Naive thymus-derived CD4-positive, alpha-beta T cell (primary cell): ENCODE measurements at regions of chr22 and their contacts with region 1.

Region 1: DNA sequence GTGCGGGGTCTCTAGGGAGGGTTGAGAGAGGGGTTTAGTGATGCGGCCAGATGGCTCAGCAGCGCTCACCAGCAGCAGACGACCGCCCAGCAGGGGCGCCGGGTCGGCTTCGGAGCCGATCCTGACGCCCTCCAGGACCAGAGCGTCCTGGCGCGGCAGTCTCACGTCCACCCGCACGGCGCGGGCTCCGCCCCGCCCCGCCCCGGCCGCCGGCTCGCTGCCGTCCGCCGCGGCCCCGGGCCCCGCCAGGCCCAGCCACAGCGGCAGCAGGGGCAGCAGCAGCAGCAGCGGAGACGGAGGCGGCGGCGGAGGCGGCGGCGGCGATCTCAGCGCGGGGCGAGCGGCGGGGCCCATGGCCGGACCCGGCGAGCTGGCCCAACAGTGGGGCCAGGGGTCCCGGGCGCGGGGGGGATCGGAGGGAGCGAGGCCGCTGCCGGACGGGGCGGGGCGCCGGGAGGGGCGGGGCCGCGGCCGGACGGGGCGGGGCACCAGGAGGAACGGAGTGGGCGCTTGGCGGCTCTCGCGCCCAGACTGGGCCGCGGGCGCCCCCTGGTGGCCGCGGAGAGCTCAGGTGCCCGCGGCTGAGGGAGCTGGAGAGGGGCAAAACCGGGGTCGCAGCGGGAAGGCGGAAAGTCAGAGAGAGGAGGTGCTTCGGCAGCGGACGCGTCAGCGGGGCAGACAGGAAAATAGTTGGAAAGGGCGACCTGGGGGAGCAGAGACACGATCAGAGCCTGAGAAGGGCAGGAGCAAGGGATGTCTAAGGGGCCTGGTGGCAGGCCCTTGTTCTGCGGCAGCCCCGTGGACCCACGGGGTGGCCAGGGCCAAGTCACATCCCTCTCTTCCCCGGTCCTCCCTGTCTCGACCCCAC is at the start of gene RNF215:
- DNase-seq: peak; percentile 55 to 92 (median 82)
- ATAC-seq: peak; percentile 97
- H3K4me3 ChIP-seq: no peak within 1 kb of the TSS
- H3K4me3 Mint-ChIP-seq: peak within 1 kb of the TSS; percentile 54 to 83 (median 78)
- H3K27ac ChIP-seq: peak within 1 kb of the TSS; percentile 26
- H3K27ac Mint-ChIP-seq: peak within 1 kb of the TSS in 6 of 9 donors; percentile 41 to 86 (median 70)
- H3K4me1 ChIP-seq: peaks cover 3 to 10% of the 10 kb centered on the region in 2 donors
- H3K4me1 Mint-ChIP-seq: peaks cover 16 to 22% (median 20%) of the 10 kb centered on the region in 7 donors
- H3K27me3 ChIP-seq: no peaks in the 10 kb centered on the region
- H3K27me3 Mint-ChIP-seq: peaks cover 0 to 4% (median 0%) of the 10 kb centered on the region in 5 donors
- total RNA-seq, gene RNF215: 4.3 to 10.8 (median 5.3) TPM

Region 2: GRCh38 chr22:30104501-30105156 is 282.6 kb before region 1 on chr22:
- CTCF ChIA-PET with region 1: interaction called, 7 read pairs
- POLR2A ChIA-PET with region 1: no interaction called
- intact Hi-C with region 1: loop called (anchors 1 to 5 kb)
- DNase-seq: peak in 6 of 9 donors; percentile 28 to 62 (median 45)
- ATAC-seq: no peak
- H3K4me3 ChIP-seq: no peak overlapping the region
- H3K4me3 Mint-ChIP-seq: peak overlapping the region in 8 of 10 donors; percentile 22 to 63 (median 42)
- H3K27ac ChIP-seq: no peak overlapping the region
- H3K27ac Mint-ChIP-seq: peak overlapping the region in 3 of 9 donors; percentile 25 to 66 (median 33)
- H3K4me1 ChIP-seq: peaks cover 0 to 16% of the 10 kb centered on the region in 2 donors
- H3K4me1 Mint-ChIP-seq: peaks cover 22 to 62% (median 46%) of the 10 kb centered on the region in 7 donors
- H3K27me3 ChIP-seq: no peaks in the 10 kb centered on the region
- H3K27me3 Mint-ChIP-seq: no peaks in the 10 kb centered on the region

Region 3: GRCh38 chr22:30326706-30327362 is 60.4 kb before region 1 on chr22 and contains the start of gene TBC1D10A:
- CTCF ChIA-PET with region 1: interaction called, 4 read pairs
- POLR2A ChIA-PET with region 1: interaction called, 4 read pairs
- intact Hi-C with region 1: loop called (anchors 1 to 2 kb)
- DNase-seq: peak; percentile 87 to 93 (median 92)
- ATAC-seq: peak; percentile 97
- H3K4me3 ChIP-seq: peak within 1 kb of the TSS; percentile 83
- H3K4me3 Mint-ChIP-seq: peak within 1 kb of the TSS; percentile 87 to 96 (median 93)
- H3K27ac ChIP-seq: peak within 1 kb of the TSS; percentile 78
- H3K27ac Mint-ChIP-seq: peak within 1 kb of the TSS; percentile 82 to 94 (median 90)
- H3K4me1 ChIP-seq: peaks cover 43 to 49% of the 10 kb centered on the region in 2 donors
- H3K4me1 Mint-ChIP-seq: peaks cover 37 to 55% (median 48%) of the 10 kb centered on the region in 7 donors
- H3K27me3 ChIP-seq: no peaks in the 10 kb centered on the region
- H3K27me3 Mint-ChIP-seq: no peaks in the 10 kb centered on the region
- total RNA-seq, gene TBC1D10A: 47.2 to 73.8 (median 70.9) TPM

Region 4: DNA sequence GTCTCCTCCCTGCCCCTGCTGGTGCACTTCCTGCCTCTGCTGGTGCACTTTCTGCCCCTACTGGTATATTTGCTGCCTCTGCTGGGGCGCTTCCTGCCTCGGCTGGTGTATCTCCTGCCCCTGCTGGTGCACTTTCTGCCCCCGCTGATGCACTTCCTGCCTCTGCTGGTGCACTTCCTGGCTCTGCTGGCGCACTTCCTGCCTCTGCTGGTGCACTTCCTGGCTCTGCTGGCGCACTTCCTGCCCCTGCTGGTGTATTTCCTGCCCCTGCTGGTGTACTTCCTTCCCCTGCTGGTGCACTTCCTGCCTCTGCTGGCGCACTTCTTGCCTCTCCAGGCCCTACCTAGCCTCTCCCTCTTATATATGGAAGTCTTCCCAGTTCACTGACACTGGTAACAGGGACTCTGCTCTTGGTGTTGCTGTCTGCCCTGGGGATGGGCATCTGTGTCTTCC is 48.5 kb after region 1 on chr22:
- CTCF ChIA-PET with region 1: interaction called, 4 read pairs
- POLR2A ChIA-PET with region 1: interaction called, 5 read pairs
- intact Hi-C with region 1: loop called in 1 of 2 experiments (anchors 2 kb)
- DNase-seq: peak; percentile 45 to 97 (median 92)
- ATAC-seq: peak; percentile 94
- H3K4me3 ChIP-seq: peak overlapping the region; percentile 53
- H3K4me3 Mint-ChIP-seq: peak overlapping the region; percentile 57 to 90 (median 83)
- H3K27ac ChIP-seq: peak overlapping the region; percentile 99
- H3K27ac Mint-ChIP-seq: peak overlapping the region; percentile 88 to 100 (median 98)
- H3K4me1 ChIP-seq: peaks cover 16 to 21% of the 10 kb centered on the region in 2 donors
- H3K4me1 Mint-ChIP-seq: peaks cover 10 to 26% (median 23%) of the 10 kb centered on the region in 7 donors
- H3K27me3 ChIP-seq: peaks cover 3 to 6% of the 10 kb centered on the region in 2 donors
- H3K27me3 Mint-ChIP-seq: peaks cover 12 to 24% (median 18%) of the 10 kb centered on the region in 5 donors

Region 5: DNA sequence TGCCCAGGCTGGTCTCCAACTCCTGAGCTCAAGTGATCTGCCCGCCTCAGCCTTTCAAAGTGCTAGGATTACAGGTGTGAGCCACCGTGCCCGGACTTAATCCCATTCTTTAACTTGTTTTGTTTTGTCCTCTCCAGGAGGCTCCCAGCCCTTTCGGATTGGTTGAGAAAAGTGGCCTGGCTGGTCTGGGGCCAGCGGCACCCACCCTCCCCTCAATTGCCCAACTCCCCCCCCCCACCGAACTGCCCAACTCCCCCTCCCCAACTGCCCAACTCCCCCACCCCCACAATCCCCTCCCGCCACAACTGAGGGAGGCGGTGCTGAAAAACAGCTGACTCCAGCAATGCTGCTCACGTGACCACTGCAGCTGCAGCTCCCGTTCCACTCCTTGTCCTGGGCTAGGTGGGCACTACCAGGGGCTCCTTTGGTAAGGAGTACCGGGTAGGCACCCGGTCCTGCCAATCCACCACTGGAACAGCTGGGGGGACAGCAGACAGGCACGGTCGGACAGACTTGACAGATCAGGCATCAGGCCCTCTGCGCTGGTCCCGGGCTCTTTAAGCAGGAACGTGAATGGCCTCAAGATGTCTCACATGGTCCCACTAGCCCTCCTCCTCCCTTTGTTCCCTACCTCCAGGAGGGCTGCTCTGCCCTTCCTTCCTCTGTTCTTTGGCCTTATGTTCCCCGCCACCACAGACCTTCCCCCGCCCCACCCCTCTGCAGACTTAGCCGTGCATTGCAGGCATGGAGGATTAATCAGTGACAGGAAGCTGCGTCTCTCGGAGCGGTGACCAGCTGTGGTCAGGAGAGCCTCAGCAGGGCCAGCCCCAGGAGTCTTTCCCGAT is 219.5 kb after region 1 on chr22 and contains the start of gene TCN2:
- CTCF ChIA-PET with region 1: no interaction called
- POLR2A ChIA-PET with region 1: no interaction called
- intact Hi-C with region 1: loop called in 1 of 2 experiments (anchors 2 kb)
- DNase-seq: peak in 8 of 9 donors; percentile 8 to 42 (median 22)
- ATAC-seq: peak; percentile 70
- H3K4me3 ChIP-seq: peak within 1 kb of the TSS; percentile 81
- H3K4me3 Mint-ChIP-seq: peak within 1 kb of the TSS; percentile 75 to 95 (median 90)
- H3K27ac ChIP-seq: peak within 1 kb of the TSS; percentile 56
- H3K27ac Mint-ChIP-seq: peak within 1 kb of the TSS; percentile 47 to 86 (median 67)
- H3K4me1 ChIP-seq: peaks cover 0 to 6% of the 10 kb centered on the region in 2 donors
- H3K4me1 Mint-ChIP-seq: peaks cover 24 to 59% (median 28%) of the 10 kb centered on the region in 7 donors
- H3K27me3 ChIP-seq: no peaks in the 10 kb centered on the region
- H3K27me3 Mint-ChIP-seq: no peaks in the 10 kb centered on the region
- total RNA-seq, gene TCN2: 0.57 to 8.9 (median 1.3) TPM